SK-N-SH (cell line): ENCODE measurements at regions of chr2 and their contacts with region 1.

Region 1: GRCh38 chr2:112029164-112029563 is 25.9 kb upstream of the TMEM87B start:
- DNase-seq: no peak
- H3K4me3 ChIP-seq: no peak overlapping the region
- H3K27ac ChIP-seq: peak overlapping the region in 1 of 2 experiments; percentile 19; a peak in 1 of 4 replicates
- H3K4me1 ChIP-seq: peaks cover 11 to 26% of the 10 kb centered on the region in 2 experiments; a peak in 3 of 4 replicates
- H3K27me3 ChIP-seq: no peaks in the 10 kb centered on the region
- CTCF ChIP-seq: no peak
- EP300 ChIP-seq: no peak
- RAD21 ChIP-seq: no peak

Region 2: GRCh38 chr2:112010751-112011150 is 18.4 kb before region 1 on chr2:
- CTCF ChIA-PET with region 1: no interaction called
- POLR2A ChIA-PET with region 1: no interaction called
- DNase-seq: no peak
- H3K4me3 ChIP-seq: no peak overlapping the region
- H3K27ac ChIP-seq: no peak overlapping the region
- H3K4me1 ChIP-seq: no peaks in the 10 kb centered on the region
- H3K27me3 ChIP-seq: no peaks in the 10 kb centered on the region
- CTCF ChIP-seq: no peak
- EP300 ChIP-seq: no peak
- RAD21 ChIP-seq: no peak

Region 3: DNA sequence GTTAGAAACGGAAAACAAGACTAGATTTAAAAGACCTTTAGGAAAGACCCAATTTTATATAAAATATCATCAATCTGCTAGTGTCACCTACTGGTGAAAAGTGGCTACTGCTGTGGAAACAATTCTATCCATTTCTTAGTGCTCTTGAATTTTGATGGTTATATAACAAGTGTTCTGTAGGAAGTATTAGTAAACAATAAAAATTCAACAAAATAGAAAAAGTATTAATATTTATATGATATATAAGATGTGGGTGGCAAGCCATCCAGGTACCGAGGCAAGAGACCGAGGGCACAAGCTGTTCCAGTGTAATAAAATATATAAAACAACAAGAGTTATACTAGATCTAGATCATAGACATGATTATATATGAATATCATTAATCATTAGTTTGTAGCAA is 19.7 kb after region 1 on chr2:
- CTCF ChIA-PET with region 1: interaction called, 11 read pairs
- POLR2A ChIA-PET with region 1: no interaction called
- DNase-seq: peak; percentile 42
- H3K4me3 ChIP-seq: peak overlapping the region in 1 of 2 experiments; percentile 29; a peak in 1 of 4 replicates
- H3K27ac ChIP-seq: no peak overlapping the region
- H3K4me1 ChIP-seq: peaks cover 5 to 8% of the 10 kb centered on the region in 2 experiments; a peak in 2 of 4 replicates
- H3K27me3 ChIP-seq: no peaks in the 10 kb centered on the region
- CTCF ChIP-seq: peak; percentile 82
- EP300 ChIP-seq: no peak
- RAD21 ChIP-seq: peak; percentile 89